Left ventricle myocardium superior (tissue), 1 donor: ENCODE measurements at regions of chr7 and their contacts with region 1.

Region 1: DNA sequence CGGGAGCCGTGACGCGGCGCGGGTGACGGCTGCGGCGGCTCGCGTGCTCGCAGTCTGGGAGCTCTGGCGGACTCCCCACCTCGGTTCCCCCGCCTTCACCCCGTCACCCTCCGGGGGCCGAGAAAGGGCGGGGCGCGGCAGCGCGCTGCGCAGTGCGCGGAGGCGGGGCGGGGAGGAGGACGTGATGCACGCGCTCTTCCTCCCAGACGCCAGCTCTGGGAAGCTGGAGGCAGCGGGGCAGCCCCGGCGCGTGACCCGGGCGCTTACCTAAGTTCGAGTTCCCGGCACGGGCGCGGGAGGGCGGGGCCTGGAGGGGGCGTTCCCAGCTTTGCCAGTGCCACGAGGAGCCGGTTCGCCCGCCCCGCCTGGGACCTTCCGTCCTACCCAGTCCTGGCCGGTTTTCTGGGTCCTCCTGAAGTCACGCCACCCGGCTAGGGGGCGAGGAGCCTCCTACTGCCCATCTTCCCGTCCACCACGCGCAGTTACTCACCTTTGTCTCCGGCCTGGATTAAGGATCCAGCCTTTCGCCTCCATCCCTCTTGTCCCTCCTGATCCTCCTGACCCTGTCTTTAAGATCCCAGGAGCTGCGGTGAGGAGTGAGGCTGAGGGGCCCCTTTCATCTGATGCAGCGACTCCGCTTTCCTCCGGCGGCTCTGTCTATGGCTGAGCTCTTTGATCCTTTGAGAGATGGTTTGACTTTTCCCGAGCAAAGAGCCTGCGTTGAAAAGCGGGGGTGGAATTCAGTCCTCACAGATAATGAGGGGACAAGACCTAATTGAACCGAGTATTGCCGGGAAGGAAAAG is 470 bp upstream of the NAMPT start:
- DNase-seq: peak; percentile 99
- ATAC-seq: peak; percentile 96

Region 2: DNA sequence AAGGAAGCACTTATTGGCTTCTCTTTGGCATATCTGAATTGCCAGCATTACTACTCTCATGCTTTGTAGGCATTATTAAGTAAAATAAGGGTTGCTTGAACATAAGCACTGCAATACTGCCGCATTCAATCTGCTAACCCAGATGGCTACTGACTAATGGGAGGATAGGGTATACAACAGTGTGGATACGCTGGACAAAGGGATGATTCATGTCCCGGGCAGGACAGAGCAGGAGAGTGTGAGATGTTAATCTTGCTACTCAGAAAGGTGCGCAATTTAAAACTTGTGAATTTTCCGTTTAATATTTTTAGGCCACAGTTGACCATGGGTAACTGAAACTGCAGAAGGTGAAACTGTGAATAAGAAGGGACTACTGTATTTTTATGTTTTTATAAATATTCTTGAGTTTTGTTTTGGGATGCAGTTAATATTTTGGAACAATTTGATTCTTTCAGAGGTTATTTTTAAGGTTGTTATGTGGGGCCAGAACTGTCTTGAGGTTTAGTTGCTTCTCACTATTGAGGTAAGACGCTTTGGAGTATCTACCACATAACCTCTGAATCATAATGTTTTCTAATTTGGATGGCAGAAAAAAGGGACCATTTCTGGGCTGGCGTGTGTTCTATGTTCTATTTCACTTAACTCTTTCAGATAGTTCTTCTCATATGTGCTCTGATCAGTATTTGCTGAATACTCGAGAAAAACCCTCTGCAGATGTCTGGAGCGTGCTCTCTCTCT is 97.5 kb before region 1 on chr7:
- intact Hi-C with region 1: loop called (anchors 10 kb)
- DNase-seq: no peak
- ATAC-seq: no peak